Dorsolateral prefrontal cortex (tissue), 120 donors: ENCODE measurements at regions of chr9 and their contacts with region 1.

Region 1: DNA sequence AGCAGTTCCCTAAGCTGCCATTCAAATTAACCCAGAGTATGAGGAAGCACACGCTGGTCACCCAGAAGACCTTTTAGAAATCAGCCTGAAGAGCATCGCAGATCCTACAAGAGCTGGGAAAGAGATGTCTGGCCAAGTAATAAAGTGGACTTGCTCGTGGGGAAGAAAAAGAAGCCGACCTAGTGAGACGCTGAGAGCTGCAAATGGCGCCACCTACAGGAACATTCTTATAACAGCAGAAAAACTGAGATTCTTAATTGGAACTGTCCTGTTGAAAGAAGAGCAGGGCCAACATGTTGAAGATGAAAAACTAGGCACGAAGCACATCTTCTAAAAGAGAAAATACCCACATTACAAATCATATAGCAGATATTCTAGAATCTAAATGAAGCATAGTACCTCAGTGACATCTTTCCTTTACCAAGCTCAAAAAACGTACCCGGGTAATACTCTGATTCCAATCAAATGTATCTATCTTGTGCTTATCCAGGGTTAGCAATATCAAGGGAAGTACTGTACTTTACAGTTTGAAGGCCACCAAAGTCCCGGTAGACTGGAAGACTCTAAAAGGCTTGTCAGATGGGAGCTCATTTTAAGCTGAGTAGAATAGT is 3.9 kb upstream of the GNAQ start:
- DNase-seq: peak in 6 of 10 donors; percentile 33 to 67 (median 57)
- H3K4me3 ChIP-seq: peak overlapping the region in 32 of 59 donors; percentile 1 to 51 (median 30)
- H3K27ac ChIP-seq: peak overlapping the region in 56 of 59 donors; percentile 12 to 90 (median 70)
- H3K27me3 ChIP-seq: no peaks in the 10 kb centered on the region
- CTCF ChIP-seq: peak; percentile 83 to 98 (median 93)

Region 2: DNA sequence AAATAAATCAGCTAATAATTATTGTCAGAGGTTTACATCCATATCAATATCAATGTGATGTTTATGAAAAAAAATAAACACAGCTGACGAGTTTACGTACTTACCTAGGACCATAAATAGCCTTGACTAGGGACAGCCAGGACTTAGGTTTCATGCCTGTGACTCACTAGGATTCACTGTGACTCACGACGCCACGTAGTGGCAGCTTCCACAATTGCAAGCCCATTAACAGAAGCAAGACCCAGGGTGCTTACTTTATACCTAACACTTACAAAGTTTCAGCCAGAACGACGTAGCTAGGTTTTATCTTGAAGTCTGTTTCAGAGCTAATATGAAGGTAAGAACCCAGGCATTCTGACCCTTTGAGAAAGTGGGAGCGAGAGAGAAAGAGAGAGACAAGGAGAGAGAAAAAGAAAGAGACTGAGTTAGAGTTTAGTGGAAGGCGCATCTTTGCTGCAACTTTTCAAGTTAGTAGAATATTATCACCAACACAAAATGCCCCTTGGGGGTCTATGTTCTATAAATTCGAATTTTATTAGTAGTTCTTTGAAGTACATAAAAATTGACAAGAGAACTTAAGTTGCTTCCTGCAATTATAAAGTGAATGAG is 578.6 kb before region 1 on chr9:
- intact Hi-C with region 1: loop called in 1 of 2 experiments (anchors 5 kb)
- DNase-seq: peak; percentile 43 to 93 (median 82)
- H3K4me3 ChIP-seq: no peak overlapping the region
- H3K27ac ChIP-seq: peak overlapping the region in 2 of 59 donors; percentile 14 to 60
- H3K27me3 ChIP-seq: no peaks in the 10 kb centered on the region
- CTCF ChIP-seq: peak; percentile 64 to 97 (median 90)

Region 3: GRCh38 chr9:77848897-77849296 is 186.6 kb before region 1 on chr9:
- intact Hi-C with region 1: loop called (anchors 5 kb)
- DNase-seq: peak in 6 of 10 donors; percentile 43 to 77 (median 64)
- H3K4me3 ChIP-seq: no peak overlapping the region
- H3K27ac ChIP-seq: peak overlapping the region in 58 of 59 donors; percentile 1 to 91 (median 72)
- H3K27me3 ChIP-seq: no peaks in the 10 kb centered on the region
- CTCF ChIP-seq: peak in 2 of 56 donors; percentile 8 to 11

Region 4: GRCh38 chr9:78121488-78121887 is 86.0 kb after region 1 on chr9:
- intact Hi-C with region 1: loop called in 1 of 2 experiments (anchors 2 kb)
- DNase-seq: peak; percentile 60 to 89 (median 74)
- H3K4me3 ChIP-seq: no peak overlapping the region
- H3K27ac ChIP-seq: peak overlapping the region in 2 of 59 donors; percentile 14 to 18
- H3K27me3 ChIP-seq: no peaks in the 10 kb centered on the region
- CTCF ChIP-seq: peak; percentile 65 to 92 (median 82)

Region 5: GRCh38 chr9:78235756-78236538 is 200.5 kb after region 1 on chr9 and contains the start of gene CEP78:
- intact Hi-C with region 1: loop called in 1 of 2 experiments (anchors 10 kb)
- DNase-seq: peak; percentile 69 to 95 (median 90)
- H3K4me3 ChIP-seq: peak within 1 kb of the TSS; percentile 57 to 98 (median 89)
- H3K27ac ChIP-seq: peak within 1 kb of the TSS; percentile 6 to 91 (median 78)
- H3K27me3 ChIP-seq: no peaks in the 10 kb centered on the region
- CTCF ChIP-seq: peak in 11 of 56 donors; percentile 7 to 41 (median 13)
- total RNA-seq, gene CEP78: 18.6 to 35.0 (median 25.0) TPM